ENCODE measurements at regions of chr11 and their contacts with region 1.

Region 1: DNA sequence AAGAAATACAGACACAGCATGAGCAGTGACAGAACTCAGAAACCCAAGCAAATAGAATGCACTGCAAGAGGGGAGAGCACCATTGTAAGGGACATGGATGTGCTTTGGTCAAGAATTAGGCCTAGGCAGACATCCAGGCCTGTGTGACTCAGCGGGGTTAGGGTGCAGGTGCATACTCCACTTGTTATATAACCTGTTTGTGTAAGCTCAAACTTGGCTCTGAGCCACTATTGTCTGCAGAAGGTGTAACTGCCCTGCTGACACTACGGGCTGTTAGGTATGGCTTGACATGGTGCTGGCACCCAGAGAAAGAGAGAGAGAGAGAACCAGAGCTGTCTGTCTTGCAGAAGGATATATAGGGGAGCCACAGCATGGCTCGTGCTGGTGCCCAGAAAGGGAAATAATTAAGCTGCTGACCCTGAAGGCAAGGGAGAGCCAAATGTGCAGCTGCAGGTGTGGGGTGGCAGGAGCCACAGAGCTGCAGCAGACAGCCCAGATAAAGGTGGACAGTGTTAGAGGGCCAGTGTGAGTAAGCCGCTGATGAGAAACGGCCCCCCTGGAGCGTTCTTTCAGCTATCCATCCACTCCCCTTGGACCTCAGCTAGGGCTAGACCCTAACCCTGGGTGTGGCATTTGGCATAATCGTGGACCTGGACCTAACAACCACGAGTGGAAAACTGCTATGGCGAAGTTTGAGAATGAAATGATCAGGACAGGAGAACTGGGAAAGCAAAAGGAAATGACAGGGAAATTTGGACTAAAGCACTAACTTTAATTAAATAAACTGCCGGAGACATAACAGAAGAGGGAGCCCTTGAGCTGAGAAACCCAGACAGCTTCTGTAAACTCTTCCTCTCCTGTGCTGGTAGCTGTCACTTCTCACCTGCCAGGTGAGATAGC is 253.0 kb upstream of the CCDC179 start:
- DNase-seq: no peak
- H3K4me3 ChIP-seq: no peak overlapping the region
- H3K27ac ChIP-seq: no peak overlapping the region
- H3K4me1 ChIP-seq: no peaks in the 10 kb centered on the region
- H3K27me3 ChIP-seq: no peaks in the 10 kb centered on the region
- CTCF ChIP-seq: no peak
- POLR2A ChIP-seq: no peak

Region 2: GRCh38 chr11:23097891-23098290 is 15.3 kb before region 1 on chr11:
- intact Hi-C with region 1: loop called (anchors 2 kb)
- DNase-seq: no peak
- H3K4me3 ChIP-seq: no peak overlapping the region
- H3K27ac ChIP-seq: no peak overlapping the region
- H3K4me1 ChIP-seq: no peaks in the 10 kb centered on the region
- H3K27me3 ChIP-seq: no peaks in the 10 kb centered on the region
- CTCF ChIP-seq: no peak
- POLR2A ChIP-seq: no peak

Measured in vagina (tissue), 2 donors.